A549 (cell line): ENCODE measurements at regions of chr14 and their contacts with region 1.

Region 1: DNA sequence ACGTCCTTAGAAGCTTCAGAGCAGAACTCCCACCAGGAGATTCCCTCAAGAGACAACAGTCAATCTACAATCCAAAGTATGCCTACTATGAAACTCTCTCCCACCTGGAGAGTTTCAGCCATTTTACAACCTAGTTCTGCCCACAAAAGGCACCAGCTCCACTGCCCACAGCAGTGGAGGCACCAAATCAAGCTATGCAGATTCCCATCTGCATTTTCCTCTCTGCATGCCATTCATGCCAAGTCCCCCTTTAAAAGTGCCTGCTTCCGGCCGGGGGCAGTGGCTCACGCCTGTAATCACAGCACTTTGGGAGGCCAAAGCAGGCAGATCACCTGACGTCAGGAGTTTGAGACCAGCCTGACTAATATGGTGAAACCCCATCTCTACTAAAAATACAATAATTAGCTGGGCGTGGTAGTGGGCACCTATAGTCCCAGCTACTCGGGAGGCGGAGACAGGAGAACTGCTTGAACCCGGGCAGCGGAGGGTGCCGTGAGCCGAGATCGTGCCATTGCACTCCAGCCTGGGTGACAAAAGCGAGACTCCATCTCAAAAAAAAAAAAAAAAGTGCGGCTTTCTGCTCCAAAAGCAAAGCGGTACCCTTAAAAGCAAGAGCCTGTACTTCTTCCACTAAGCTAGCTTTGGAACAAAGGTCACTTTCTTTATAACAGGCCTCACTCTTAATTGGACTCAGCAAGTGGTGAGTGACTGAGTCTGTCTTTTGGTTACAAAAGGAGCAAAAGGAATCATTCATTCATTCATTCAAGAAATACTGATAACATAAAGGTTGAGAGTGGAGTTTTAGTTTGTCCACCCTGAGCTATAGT is 10.1 kb upstream of the DLGAP5 start:
- DNase-seq: no peak
- ATAC-seq: no peak
- H3K4me3 ChIP-seq: no peak overlapping the region
- H3K27ac ChIP-seq: no peak overlapping the region
- H3K4me1 ChIP-seq: no peaks in the 10 kb centered on the region
- CTCF ChIP-seq: no peak
- EP300 ChIP-seq: no peak
- POLR2A ChIP-seq: no peak
- RAD21 ChIP-seq: no peak

Region 2: DNA sequence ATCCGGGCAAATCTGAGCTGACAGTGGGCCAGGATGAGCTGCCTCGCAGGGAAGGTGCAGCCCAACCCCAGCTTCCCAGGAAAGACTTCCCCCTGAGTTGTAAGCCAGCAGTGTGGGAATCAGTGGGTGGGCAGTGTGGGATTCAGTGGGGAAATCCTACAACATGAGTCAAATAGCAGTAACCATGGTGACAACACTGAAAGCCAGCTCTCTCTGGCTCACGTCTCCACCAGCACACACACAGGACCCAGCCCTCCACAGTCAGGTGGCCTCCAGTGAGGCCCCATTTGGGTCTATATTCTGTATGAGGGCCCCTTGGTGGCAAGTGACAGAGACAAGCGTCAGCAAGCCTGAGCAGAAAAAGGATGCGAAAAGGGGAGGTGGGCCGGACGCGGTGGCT is 78.3 kb before region 1 on chr14:
- CTCF ChIA-PET with region 1: no interaction called
- POLR2A ChIA-PET with region 1: no interaction called
- DNase-seq: no peak
- ATAC-seq: peak in 1 of 2 experiments; percentile 36; a peak in 2 of 6 replicates
- H3K4me3 ChIP-seq: no peak overlapping the region
- H3K27ac ChIP-seq: no peak overlapping the region
- H3K4me1 ChIP-seq: peaks cover 27% of the 10 kb centered on the region
- CTCF ChIP-seq: no peak
- EP300 ChIP-seq: no peak
- POLR2A ChIP-seq: no peak
- RAD21 ChIP-seq: no peak

Region 3: DNA sequence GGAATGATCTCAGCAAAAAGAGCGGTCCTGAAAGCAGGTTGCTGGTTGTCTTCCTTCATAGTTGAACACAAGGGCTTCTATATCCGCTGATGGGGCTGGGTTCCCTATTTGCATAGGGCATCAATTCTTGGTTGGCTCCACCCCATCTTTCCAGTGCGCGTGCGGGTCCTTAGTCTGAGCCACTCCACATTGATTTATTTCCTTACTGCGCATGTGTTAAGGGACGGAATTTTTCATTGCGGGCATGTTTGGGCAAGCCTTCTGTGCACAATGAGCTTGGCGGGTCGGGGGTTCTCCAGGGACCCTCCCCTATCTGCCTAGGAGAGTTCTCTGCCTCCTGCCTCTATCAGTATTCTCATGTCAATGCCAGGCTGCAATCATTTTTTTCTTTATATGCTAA is 11.2 kb after region 1 on chr14:
- CTCF ChIA-PET with region 1: interaction called, 20 read pairs
- POLR2A ChIA-PET with region 1: interaction called, 3 read pairs
- DNase-seq: no peak
- ATAC-seq: peak in 1 of 2 experiments; percentile 32; a peak in 3 of 6 replicates
- H3K4me3 ChIP-seq: no peak overlapping the region
- H3K27ac ChIP-seq: no peak overlapping the region
- H3K4me1 ChIP-seq: no peaks in the 10 kb centered on the region
- CTCF ChIP-seq: no peak
- EP300 ChIP-seq: no peak
- POLR2A ChIP-seq: no peak
- RAD21 ChIP-seq: no peak

Region 4: GRCh38 chr14:55254581-55254980 is 53.1 kb after region 1 on chr14:
- CTCF ChIA-PET with region 1: no interaction called
- POLR2A ChIA-PET with region 1: no interaction called
- DNase-seq: no peak
- ATAC-seq: peak in 1 of 2 experiments; percentile 39; a peak in 1 of 6 replicates
- H3K4me3 ChIP-seq: no peak overlapping the region
- H3K27ac ChIP-seq: no peak overlapping the region
- H3K4me1 ChIP-seq: no peaks in the 10 kb centered on the region
- CTCF ChIP-seq: no peak
- EP300 ChIP-seq: no peak
- POLR2A ChIP-seq: no peak
- RAD21 ChIP-seq: no peak